Activated naive CD4-positive, alpha-beta T cell treated with anti-CD3 and anti-CD28 coated beads, Interleukin-2, amount 10 ng/mL, durations not matched to agents 7 days and 5 days (primary cell): ENCODE measurements at regions of chr12 and their contacts with region 1.

Region 1: DNA sequence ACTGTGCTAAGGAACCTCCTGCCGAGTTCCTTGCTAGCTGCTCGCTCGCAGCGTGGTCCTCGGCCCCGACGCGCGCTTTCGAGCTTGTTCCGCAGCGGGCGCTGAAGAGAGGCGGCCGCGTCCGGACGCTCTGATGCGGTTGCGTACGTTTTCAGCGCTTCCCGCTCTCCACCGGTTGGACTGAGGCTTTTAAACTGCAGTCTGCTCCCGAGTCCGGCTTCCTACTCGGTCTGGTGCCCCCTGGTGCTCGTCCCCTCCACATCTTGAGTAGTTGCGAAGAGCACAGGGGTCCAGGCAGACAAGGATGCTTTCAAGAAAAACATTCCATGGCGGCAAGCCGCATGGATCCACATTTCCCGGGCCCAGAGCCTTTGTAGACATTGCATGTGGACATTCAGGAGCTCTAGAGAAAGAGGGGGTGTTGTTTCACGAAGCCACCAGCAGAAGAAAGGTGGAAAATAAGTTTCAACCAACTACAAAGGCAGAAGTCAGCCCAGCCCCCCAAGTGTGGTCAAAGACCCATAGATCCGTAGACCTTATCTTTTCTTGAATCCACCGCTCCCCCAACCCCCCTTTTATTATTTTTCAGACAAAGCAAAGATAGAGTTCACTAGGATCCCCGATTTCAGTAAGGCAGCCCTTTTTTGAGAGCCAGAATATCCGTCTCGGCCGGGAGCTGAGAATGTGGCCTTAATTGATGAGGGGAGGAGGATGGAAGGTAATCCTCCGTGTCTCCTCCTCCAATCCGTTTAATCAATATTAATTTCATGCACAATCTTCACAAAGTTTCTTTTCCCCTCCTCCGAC is 984 bp upstream of the WNK1 start:
- DNase-seq: peak; percentile 93
- H3K4me3 Mint-ChIP-seq: no peak overlapping the region
- H3K27ac Mint-ChIP-seq: no peak overlapping the region
- H3K4me1 Mint-ChIP-seq: peaks cover 25% of the 10 kb centered on the region
- H3K27me3 Mint-ChIP-seq: no peaks in the 10 kb centered on the region

Region 2: GRCh38 chr12:569803-570434 is 181.5 kb before region 1 on chr12:
- CTCF ChIA-PET with region 1: interaction called, 74 read pairs
- DNase-seq: peak; percentile 90
- H3K4me3 Mint-ChIP-seq: peak overlapping the region; percentile 78
- H3K27ac Mint-ChIP-seq: no peak overlapping the region
- H3K4me1 Mint-ChIP-seq: peaks cover 78% of the 10 kb centered on the region
- H3K27me3 Mint-ChIP-seq: peaks cover 3% of the 10 kb centered on the region

Region 3: GRCh38 chr12:622416-622815 is 129.0 kb before region 1 on chr12:
- CTCF ChIA-PET with region 1: interaction called, 12 read pairs
- DNase-seq: no peak
- H3K4me3 Mint-ChIP-seq: no peak overlapping the region
- H3K27ac Mint-ChIP-seq: peak overlapping the region; percentile 68
- H3K4me1 Mint-ChIP-seq: peaks cover 56% of the 10 kb centered on the region
- H3K27me3 Mint-ChIP-seq: peaks cover 3% of the 10 kb centered on the region

Region 4: GRCh38 chr12:659090-659705 is 92.2 kb before region 1 on chr12:
- CTCF ChIA-PET with region 1: interaction called, 11 read pairs
- DNase-seq: no peak
- H3K4me3 Mint-ChIP-seq: no peak overlapping the region
- H3K27ac Mint-ChIP-seq: no peak overlapping the region
- H3K4me1 Mint-ChIP-seq: peaks cover 28% of the 10 kb centered on the region
- H3K27me3 Mint-ChIP-seq: peaks cover 13% of the 10 kb centered on the region

Region 5: GRCh38 chr12:685388-685787 is 66.0 kb before region 1 on chr12:
- CTCF ChIA-PET with region 1: interaction called, 12 read pairs
- DNase-seq: peak; percentile 93
- H3K4me3 Mint-ChIP-seq: peak overlapping the region; percentile 33
- H3K27ac Mint-ChIP-seq: peak overlapping the region; percentile 95
- H3K4me1 Mint-ChIP-seq: peaks cover 35% of the 10 kb centered on the region
- H3K27me3 Mint-ChIP-seq: no peaks in the 10 kb centered on the region

Region 6: DNA sequence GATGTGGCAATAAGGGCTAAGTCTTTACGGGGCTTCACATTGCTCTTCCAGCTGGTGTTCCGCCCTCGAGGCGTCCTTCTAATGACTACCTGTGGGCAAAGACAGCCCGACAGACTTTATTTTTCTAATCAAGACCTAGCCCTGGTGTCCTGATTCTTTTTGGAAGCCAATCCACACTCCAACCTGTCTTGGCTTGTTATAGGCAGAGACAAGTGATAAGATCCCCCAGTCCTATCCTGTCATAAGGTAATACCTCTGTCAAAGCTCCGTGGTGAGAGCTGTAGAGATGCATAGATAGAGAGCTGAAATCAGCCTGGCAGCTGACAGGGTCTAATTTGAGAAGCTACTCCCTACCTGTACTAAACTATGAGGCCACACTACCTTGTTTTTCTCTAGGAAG is 10.5 kb before region 1 on chr12:
- CTCF ChIA-PET with region 1: interaction called, 10 read pairs
- DNase-seq: no peak
- H3K4me3 Mint-ChIP-seq: no peak overlapping the region
- H3K27ac Mint-ChIP-seq: no peak overlapping the region
- H3K4me1 Mint-ChIP-seq: peaks cover 22% of the 10 kb centered on the region
- H3K27me3 Mint-ChIP-seq: no peaks in the 10 kb centered on the region

Region 7: DNA sequence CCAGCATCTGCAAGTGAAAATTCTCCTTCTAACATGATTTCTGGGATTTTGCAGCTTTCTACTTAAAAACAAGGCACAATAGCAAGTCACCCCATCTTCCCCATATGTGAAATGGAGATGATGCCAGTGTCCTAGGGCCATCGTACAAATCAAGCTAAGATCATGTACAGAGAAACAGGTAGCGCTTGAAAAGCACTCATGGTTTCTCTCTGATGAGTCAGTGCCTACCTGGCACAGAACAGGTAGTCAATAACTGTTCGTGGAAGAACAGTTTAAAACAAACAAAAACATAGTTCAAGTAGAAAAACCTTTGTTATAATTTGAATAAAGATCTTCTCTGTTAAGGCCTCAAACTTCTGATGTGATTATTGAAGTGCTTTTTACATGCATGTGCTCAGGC is 151.2 kb after region 1 on chr12:
- CTCF ChIA-PET with region 1: no interaction called
- DNase-seq: no peak
- H3K4me3 Mint-ChIP-seq: no peak overlapping the region
- H3K27ac Mint-ChIP-seq: no peak overlapping the region
- H3K4me1 Mint-ChIP-seq: peaks cover 32% of the 10 kb centered on the region
- H3K27me3 Mint-ChIP-seq: no peaks in the 10 kb centered on the region